ENCODE measurements at regions of chr11 and their contacts with region 1.

Region 1: DNA sequence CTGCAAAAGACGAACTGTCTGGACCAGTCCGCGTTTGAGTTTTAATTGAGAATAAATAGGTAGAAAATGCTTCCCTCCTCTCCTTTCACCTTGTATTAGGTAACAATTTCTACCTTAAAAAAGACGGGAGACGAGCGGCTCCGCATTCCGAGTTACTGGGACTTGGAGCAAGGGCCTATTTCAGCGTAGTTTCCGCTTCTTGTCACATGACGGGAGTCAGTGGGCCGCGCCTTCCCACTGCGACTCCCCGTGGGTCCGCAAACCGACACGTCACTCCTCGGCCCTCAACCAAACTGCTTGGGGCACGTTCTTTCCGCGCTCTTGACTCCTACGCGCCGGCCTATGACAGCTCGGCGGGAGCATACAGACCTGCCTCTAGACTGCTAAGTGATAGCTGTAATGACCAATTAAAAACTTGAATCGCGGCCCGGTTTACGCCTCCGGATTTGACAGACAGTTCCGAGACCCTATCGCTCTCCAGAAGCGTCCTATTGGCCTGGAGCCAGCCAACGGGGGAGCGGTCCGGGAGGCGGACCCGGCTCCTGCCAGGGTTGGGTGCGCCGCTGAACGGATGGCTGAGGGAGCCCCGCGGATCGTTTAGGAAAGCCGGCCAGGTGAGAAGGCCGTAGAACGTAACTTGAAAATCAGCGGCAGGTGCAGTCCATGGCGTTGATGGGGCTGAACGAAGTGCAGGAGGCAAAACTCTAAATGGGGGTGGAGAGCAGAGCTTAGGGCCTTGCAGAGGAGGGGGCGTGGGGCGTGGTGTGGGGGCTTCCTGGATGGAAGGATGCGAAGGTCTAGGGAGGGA is at the start of gene STT3A:
- DNase-seq: peak; percentile 100
- H3K4me3 ChIP-seq: peak within 1 kb of the TSS; percentile 86 to 96 (median 91)
- H3K27ac ChIP-seq: peak within 1 kb of the TSS; percentile 89
- H3K4me1 ChIP-seq: peaks cover 11% of the 10 kb centered on the region
- H3K27me3 ChIP-seq: no peaks in the 10 kb centered on the region
- CTCF ChIP-seq: no peak
- total RNA-seq, gene STT3A: 172 to 179 TPM

Region 2: GRCh38 chr11:125494974-125495725 is 97.4 kb before region 1 on chr11:
- CTCF ChIA-PET with region 1: no interaction called
- dilution Hi-C with region 1: no loop called
- in situ Hi-C with region 1: no loop called
- intact Hi-C with region 1: loop called (anchors 1 kb)
- DNase-seq: peak; percentile 74
- H3K4me3 ChIP-seq: peak overlapping the region; percentile 82 to 93 (median 86)
- H3K27ac ChIP-seq: peak overlapping the region; percentile 71
- H3K4me1 ChIP-seq: peaks cover 19% of the 10 kb centered on the region
- H3K27me3 ChIP-seq: no peaks in the 10 kb centered on the region
- CTCF ChIP-seq: no peak

Region 3: DNA sequence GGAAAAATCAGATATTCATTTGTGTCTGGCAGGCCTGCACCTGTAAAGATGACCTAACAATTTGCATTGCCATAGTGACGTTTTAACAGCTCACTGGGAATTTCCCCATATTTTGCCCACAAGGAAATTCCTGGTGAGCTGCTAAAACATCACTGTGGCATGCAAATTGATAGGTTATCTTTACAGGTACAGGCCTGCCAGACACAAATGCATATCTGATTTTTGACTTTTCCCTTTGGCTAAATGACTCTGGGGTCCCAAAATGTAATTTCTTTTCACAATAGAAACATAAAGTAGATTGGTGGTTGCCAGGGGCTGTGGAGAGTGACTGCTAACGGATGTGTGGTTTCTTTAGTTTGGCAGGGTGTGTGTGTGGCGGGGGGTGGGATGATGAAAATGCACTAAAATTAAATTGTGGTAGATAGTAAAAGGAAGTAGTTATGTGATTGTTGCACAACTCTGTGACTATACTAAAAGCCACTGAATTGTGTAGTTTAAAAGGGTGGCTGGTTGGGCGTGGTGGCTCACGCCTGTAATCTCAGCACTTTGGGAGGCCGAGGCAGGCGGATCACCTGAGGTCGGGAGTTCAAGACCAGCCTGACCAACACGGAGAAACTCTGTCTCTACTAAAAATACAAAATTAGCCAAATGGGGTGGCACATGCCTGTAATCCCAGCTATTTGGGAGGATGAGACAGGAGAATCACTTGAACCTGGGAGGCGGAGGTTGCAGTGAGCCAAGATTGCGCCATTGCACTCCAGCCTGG is 78.0 kb before region 1 on chr11:
- CTCF ChIA-PET with region 1: no interaction called
- dilution Hi-C with region 1: no loop called
- in situ Hi-C with region 1: no loop called
- intact Hi-C with region 1: loop called (anchors 1 kb)
- DNase-seq: peak; percentile 98
- H3K4me3 ChIP-seq: no peak overlapping the region
- H3K27ac ChIP-seq: peak overlapping the region; percentile 88
- H3K4me1 ChIP-seq: peaks cover 15% of the 10 kb centered on the region
- H3K27me3 ChIP-seq: no peaks in the 10 kb centered on the region
- CTCF ChIP-seq: no peak

Region 4: GRCh38 chr11:125568970-125569914 is 23.3 kb before region 1 on chr11 and contains the start of gene EI24:
- CTCF ChIA-PET with region 1: no interaction called
- dilution Hi-C with region 1: no loop called
- in situ Hi-C with region 1: no loop called
- intact Hi-C with region 1: loop called (anchors 1 kb)
- DNase-seq: peak; percentile 90
- H3K4me3 ChIP-seq: peak within 1 kb of the TSS; percentile 57 to 82 (median 77)
- H3K27ac ChIP-seq: peak within 1 kb of the TSS; percentile 78
- H3K4me1 ChIP-seq: peaks cover 9% of the 10 kb centered on the region
- H3K27me3 ChIP-seq: no peaks in the 10 kb centered on the region
- CTCF ChIP-seq: peak; percentile 40 to 78
- total RNA-seq, gene EI24: 127 to 162 TPM

Region 5: DNA sequence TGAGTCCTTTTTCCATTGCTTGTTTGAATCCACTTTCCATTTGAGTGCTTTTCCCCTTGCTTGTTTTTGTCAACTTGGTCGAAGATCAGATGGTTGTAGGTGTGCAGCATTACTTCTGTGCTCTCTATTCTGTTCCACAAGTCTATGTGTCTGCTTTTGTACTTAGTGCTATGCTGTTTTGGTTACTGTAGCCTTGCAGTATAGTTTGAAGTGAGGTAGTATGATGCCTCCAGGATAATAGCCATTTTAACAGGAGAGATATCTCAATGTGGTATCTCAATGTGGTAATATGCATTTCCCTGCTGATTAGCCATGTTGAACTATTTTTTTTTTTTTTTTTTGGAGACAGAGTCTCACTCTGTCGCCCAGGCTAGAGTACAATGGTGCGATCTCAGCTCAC is 71.4 kb after region 1 on chr11:
- CTCF ChIA-PET with region 1: no interaction called
- dilution Hi-C with region 1: no loop called
- in situ Hi-C with region 1: no loop called
- intact Hi-C with region 1: no loop called
- DNase-seq: peak; percentile 23
- H3K4me3 ChIP-seq: no peak overlapping the region
- H3K27ac ChIP-seq: no peak overlapping the region
- H3K4me1 ChIP-seq: no peaks in the 10 kb centered on the region
- H3K27me3 ChIP-seq: no peaks in the 10 kb centered on the region
- CTCF ChIP-seq: no peak

Measured in mammary epithelial cell (primary cell).